Posterior vena cava (tissue), 2 donors: ENCODE measurements at regions of chr3 and their contacts with region 1.

Region 1: GRCh38 chr3:117184574-117184973 is 475.0 kb downstream of the TUSC7 start:
- DNase-seq: no peak

Region 2: DNA sequence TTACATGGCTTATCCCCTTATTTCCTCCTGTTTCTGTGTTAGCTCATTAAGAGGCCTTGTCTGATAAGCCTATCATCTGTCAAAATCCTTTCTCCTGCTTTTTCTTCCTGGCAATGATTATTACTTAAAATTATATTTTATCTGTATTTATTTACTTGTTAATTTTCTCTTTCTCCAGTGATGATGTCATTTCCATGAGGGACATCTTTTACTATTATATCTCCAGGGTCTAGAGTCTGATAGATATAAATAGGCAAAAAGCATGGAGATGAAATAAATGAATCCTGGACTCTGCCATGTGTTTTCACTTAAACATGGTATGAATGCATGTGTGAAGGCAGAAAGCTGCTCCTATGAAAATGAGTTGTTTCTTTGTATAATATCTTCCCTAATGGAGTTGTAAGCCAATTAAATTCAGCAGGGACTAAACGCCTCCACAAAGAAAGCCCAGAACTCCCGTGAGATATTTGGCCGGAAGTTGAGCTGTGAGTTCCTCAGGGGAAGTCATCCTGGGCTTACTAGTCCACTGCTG is 99.8 kb before region 1 on chr3:
- intact Hi-C with region 1: no loop called
- DNase-seq: no peak

Region 3: GRCh38 chr3:117160176-117160575 is 24.4 kb before region 1 on chr3:
- intact Hi-C with region 1: loop called in 1 of 2 experiments (anchors 1 kb)
- DNase-seq: no peak